Activated CD4-positive, alpha-beta memory T cell treated with anti-CD3 and anti-CD28 coated beads for 36 hours (primary cell): ENCODE measurements at regions of chr6 and their contacts with region 1.

Region 1: DNA sequence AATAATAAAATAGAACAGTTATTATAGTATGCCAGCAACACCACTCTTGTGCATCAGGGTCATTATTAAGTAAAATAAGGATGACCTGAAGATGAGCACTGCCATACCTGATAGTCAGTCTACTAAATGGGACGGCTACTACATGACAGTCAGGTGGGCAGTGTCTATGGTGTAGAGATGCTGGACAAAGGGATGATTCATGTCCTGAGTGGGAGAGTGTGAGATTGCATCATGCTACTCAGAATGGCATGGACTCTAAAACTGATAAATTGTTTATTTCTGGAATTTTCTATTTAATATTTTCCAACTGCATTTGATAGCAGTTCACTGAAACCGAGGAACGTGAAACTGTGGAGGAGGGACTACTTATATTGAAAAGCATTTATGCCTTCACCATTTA is 38.8 kb downstream of the SNX9 start:
- DNase-seq: no peak
- H3K4me3 Mint-ChIP-seq: no peak overlapping the region
- H3K27ac Mint-ChIP-seq: no peak overlapping the region
- H3K4me1 Mint-ChIP-seq: peaks cover 68% of the 10 kb centered on the region
- H3K27me3 Mint-ChIP-seq: no peaks in the 10 kb centered on the region

Region 2: GRCh38 chr6:157830354-157831017 is 31.3 kb before region 1 on chr6:
- CTCF ChIA-PET with region 1: no interaction called
- POLR2A ChIA-PET with region 1: no interaction called
- intact Hi-C with region 1: loop called (anchors 1 kb)
- DNase-seq: no peak
- H3K4me3 Mint-ChIP-seq: peak overlapping the region; percentile 20
- H3K27ac Mint-ChIP-seq: peak overlapping the region; percentile 62
- H3K4me1 Mint-ChIP-seq: peaks cover 69% of the 10 kb centered on the region
- H3K27me3 Mint-ChIP-seq: no peaks in the 10 kb centered on the region

Region 3: DNA sequence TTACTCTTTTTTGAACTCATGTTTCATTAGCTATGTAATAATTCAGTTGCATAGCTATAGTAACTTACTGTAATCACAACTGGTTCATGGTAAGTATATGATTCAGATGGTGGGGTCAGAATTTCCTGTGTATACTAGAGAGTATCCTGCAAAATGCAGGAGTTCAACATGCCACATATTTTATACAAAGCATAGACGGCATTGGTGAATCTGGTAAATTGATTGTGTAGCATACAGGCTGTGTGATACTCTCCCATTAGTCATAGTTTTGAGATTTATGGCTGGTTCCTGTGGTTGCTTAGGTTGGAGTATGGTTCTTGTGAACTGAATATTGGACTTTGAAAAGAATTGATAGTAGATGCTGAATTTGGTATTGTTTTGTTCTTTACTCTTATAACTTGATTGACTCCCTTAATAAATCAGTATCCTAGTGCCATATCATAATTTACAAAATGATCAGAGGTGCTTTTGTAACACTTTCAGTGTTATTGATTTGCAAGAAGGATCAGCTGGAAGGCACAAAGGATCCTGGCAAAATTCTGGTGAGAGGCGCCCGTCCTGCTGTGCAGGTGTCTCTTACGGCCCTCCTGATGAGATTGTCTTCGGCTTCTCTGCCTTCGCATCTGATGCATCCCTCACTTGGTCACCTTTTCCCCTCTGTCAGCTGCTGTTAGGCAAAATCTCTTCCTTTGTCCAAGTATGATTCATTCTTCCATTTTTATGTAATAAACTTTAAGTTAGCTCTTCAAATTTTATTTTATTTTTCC is 16.1 kb before region 1 on chr6:
- CTCF ChIA-PET with region 1: no interaction called
- POLR2A ChIA-PET with region 1: interaction called, 4 read pairs
- intact Hi-C with region 1: loop called (anchors 1 kb)
- DNase-seq: no peak
- H3K4me3 Mint-ChIP-seq: no peak overlapping the region
- H3K27ac Mint-ChIP-seq: peak overlapping the region; percentile 63
- H3K4me1 Mint-ChIP-seq: peaks cover 91% of the 10 kb centered on the region
- H3K27me3 Mint-ChIP-seq: no peaks in the 10 kb centered on the region